GM12878 (cell line): ENCODE measurements at regions of chr15 and their contacts with region 1.

Region 1: GRCh38 chr15:67501177-67501835 is 19.6 kb upstream of the C15orf61 start:
- DNase-seq: no peak
- ATAC-seq: peak; percentile 78
- H3K4me3 ChIP-seq: no peak overlapping the region
- H3K27ac ChIP-seq: no peak overlapping the region
- H3K4me1 ChIP-seq: peaks cover 6% of the 10 kb centered on the region; the same call in 1 of the 2 replicates
- H3K27me3 ChIP-seq: no peaks in the 10 kb centered on the region
- CTCF ChIP-seq: peak; percentile 23 to 64 (median 41); a peak in 4 of 6 replicates
- EP300 ChIP-seq: no peak
- POLR2A ChIP-seq: no peak
- RAD21 ChIP-seq: peak; percentile 58

Region 2: DNA sequence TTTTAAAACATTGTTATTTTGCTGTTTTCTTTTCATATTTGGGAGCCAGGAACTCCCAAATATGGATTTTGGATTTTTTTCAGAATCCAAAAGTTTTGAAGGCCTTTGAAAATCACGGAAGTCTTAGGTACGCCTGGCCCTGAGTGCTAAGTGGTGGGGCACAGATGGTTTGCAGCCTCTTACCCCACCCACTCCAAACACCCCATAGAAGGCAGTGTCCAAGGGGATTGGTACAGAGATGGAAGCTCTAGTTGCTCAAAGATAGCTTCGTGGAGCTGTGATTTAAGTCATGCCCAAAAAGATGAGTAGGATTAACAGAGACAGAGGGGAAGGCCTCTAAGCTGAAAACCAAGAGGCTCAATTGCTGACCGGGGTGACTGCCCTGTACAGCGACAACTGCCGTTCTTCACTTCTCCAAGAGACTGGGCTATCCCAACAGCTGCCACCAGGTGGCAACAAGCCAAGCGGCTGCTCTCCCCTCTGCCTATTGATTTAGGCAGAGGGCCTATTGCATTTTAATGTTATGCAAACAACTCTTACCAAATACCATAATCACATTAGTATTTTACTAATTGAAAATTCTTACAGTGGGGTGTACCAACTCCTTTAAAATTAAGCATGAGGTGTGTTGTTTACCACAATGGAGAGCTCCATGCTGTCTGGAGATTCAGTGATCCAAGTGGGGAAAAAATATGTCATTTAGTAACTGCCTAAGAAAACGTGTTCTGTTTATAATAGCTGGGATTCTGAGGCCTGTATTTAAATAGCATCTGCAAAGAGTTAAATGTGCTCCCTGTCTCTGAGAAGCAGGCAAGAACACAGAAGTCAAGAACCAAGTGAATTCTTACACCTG is 44.4 kb before region 1 on chr15:
- CTCF ChIA-PET with region 1: interaction called, 20 read pairs
- POLR2A ChIA-PET with region 1: no interaction called
- RAD21 ChIA-PET with region 1: interaction called, 3 read pairs
- SMC1A ChIA-PET with region 1: interaction called, 13 read pairs
- in situ Hi-C with region 1: no loop called
- intact Hi-C with region 1: no loop called
- DNase-seq: peak; percentile 23
- ATAC-seq: peak; percentile 99
- H3K4me3 ChIP-seq: no peak overlapping the region
- H3K27ac ChIP-seq: no peak overlapping the region
- H3K4me1 ChIP-seq: no peaks in the 10 kb centered on the region
- H3K27me3 ChIP-seq: no peaks in the 10 kb centered on the region
- CTCF ChIP-seq: peak; percentile 94 to 96 (median 95); a peak in 5 of 6 replicates
- EP300 ChIP-seq: no peak
- POLR2A ChIP-seq: no peak
- RAD21 ChIP-seq: peak; percentile 86

Region 3: DNA sequence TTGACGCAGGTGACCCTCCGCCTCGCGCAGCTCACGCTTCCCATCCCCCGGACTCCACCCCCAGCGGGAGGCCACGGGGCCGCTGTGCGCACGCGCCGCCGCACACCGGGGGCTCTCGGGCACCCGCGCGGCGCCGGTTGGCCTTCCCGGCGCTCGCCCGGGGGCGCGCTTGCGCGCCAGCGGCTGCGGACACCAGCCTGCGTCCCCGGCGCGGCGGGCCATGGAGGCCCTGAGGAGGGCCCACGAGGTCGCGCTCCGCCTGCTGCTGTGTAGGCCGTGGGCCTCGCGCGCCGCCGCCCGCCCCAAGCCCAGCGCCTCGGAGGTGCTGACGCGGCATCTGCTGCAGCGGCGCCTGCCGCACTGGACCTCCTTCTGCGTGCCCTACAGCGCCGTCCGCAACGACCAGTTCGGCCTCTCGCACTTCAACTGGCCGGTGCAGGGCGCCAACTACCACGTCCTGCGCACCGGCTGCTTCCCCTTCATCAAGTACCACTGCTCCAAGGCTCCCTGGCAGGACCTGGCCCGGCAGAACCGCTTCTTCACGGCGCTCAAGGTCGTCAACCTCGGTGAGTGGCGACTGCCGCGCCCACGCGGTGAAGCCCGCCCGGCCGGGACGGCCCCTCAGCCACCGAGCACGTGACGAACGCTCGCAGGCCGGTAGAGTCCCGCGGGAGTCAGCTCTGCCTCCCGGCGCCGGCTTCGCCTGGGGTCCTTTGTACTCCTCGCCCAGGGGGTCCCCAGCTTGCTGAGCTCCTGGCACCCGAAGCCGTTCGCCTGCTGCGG is 19.9 kb after region 1 on chr15 and contains the start of gene C15orf61:
- CTCF ChIA-PET with region 1: interaction called, 5 read pairs
- POLR2A ChIA-PET with region 1: interaction called, 4 read pairs
- RAD21 ChIA-PET with region 1: interaction called, 11 read pairs
- SMC1A ChIA-PET with region 1: interaction called, 15 read pairs
- in situ Hi-C with region 1: no loop called
- intact Hi-C with region 1: no loop called
- DNase-seq: peak; percentile 76
- ATAC-seq: peak; percentile 84
- H3K4me3 ChIP-seq: peak within 1 kb of the TSS; percentile 93
- H3K27ac ChIP-seq: peak within 1 kb of the TSS; percentile 62
- H3K4me1 ChIP-seq: no peaks in the 10 kb centered on the region
- H3K27me3 ChIP-seq: no peaks in the 10 kb centered on the region
- CTCF ChIP-seq: peak in 2 of 3 experiments; percentile 0 to 7; a peak in 1 of 6 replicates
- EP300 ChIP-seq: 0 out of 4 replicates have a peak, but pooled peaks of 1 of the 2 experiments have one; percentile 10
- POLR2A ChIP-seq: peak; percentile 88
- RAD21 ChIP-seq: no peak
- polyA plus RNA-seq, gene C15orf61: 1.4 to 4.5 TPM

Region 4: DNA sequence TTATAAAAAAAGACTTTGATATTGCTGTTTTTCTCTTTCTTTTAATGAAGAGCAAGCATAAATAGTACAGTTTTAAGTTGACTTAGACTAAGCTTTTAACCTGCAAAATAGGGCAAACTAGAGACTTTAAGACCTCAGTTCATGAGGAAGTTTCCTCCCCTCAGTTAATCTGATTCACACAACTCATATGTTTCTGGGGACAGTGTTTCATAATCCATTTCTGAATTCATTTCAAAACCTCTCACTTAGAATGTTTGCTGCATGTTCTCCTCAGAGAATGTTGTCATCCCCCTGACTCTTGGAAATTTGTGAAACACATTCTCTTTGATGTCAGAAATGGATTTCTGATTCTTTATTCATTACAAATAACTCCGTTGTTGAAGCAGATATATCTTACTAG is 244.7 kb after region 1 on chr15:
- CTCF ChIA-PET with region 1: interaction called, 3 read pairs
- POLR2A ChIA-PET with region 1: no interaction called
- RAD21 ChIA-PET with region 1: interaction called, 10 read pairs
- SMC1A ChIA-PET with region 1: interaction called, 4 read pairs
- in situ Hi-C with region 1: no loop called
- intact Hi-C with region 1: no loop called
- DNase-seq: no peak
- ATAC-seq: no peak
- H3K4me3 ChIP-seq: no peak overlapping the region
- H3K27ac ChIP-seq: no peak overlapping the region
- H3K4me1 ChIP-seq: peaks cover 7% of the 10 kb centered on the region
- H3K27me3 ChIP-seq: no peaks in the 10 kb centered on the region
- CTCF ChIP-seq: no peak
- EP300 ChIP-seq: no peak
- POLR2A ChIP-seq: no peak
- RAD21 ChIP-seq: no peak

Region 5: GRCh38 chr15:67833710-67834511 is 332.6 kb after region 1 on chr15:
- CTCF ChIA-PET with region 1: interaction called, 49 read pairs
- POLR2A ChIA-PET with region 1: interaction called, 3 read pairs
- RAD21 ChIA-PET with region 1: interaction called, 26 read pairs
- SMC1A ChIA-PET with region 1: interaction called, 15 read pairs
- in situ Hi-C with region 1: no loop called
- intact Hi-C with region 1: loop called (anchors 1 kb)
- DNase-seq: no peak
- ATAC-seq: peak; percentile 71
- H3K4me3 ChIP-seq: peak overlapping the region; percentile 34; the same call in 1 of the 2 replicates
- H3K27ac ChIP-seq: no peak overlapping the region
- H3K4me1 ChIP-seq: peaks cover 19% of the 10 kb centered on the region
- H3K27me3 ChIP-seq: peaks cover 21 to 35% of the 10 kb centered on the region in 2 experiments
- CTCF ChIP-seq: peak; percentile 51 to 76 (median 76)
- EP300 ChIP-seq: no peak
- POLR2A ChIP-seq: no peak
- RAD21 ChIP-seq: peak; percentile 76